ENCODE measurements at regions of chr21 and their contacts with region 1.

Region 1: DNA sequence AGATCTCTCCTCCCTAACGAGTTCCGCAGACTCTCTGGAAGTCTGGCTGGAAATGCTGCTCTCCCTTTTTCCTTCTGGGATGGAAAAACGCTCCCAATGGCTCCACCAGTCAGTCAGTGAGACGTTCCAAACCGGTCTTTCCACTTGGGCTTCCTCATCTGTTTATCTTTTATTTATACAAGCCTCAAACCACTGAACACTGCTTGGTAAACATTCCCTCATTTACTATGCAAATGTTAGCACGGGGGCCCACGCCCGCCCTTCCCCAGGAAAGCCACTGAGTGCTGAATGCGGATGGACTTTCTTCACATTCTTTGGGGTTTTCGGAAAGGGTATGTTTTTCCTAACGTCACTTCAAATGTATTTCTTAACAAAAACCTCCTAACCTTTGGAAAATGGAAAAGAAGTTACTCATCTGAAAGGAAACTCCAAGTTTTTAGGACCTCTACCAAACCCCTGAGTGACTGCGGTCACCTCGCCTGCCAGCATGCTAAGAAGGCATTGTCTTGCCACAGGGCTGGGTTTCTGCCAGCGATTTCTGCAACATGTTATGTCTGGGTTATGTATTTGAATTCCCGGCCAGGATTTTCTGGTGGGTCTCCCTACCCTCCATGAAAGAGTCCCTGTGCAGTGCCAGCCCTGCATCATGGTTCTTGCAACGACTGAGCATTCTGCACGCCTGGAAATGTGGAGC is 14.0 kb upstream of the UMODL1 start:
- DNase-seq: no peak
- H3K4me3 ChIP-seq: no peak overlapping the region
- H3K27ac ChIP-seq: no peak overlapping the region
- H3K4me1 ChIP-seq: no peaks in the 10 kb centered on the region
- H3K27me3 ChIP-seq: no peaks in the 10 kb centered on the region
- CTCF ChIP-seq: no peak
- POLR2A ChIP-seq: no peak

Region 2: DNA sequence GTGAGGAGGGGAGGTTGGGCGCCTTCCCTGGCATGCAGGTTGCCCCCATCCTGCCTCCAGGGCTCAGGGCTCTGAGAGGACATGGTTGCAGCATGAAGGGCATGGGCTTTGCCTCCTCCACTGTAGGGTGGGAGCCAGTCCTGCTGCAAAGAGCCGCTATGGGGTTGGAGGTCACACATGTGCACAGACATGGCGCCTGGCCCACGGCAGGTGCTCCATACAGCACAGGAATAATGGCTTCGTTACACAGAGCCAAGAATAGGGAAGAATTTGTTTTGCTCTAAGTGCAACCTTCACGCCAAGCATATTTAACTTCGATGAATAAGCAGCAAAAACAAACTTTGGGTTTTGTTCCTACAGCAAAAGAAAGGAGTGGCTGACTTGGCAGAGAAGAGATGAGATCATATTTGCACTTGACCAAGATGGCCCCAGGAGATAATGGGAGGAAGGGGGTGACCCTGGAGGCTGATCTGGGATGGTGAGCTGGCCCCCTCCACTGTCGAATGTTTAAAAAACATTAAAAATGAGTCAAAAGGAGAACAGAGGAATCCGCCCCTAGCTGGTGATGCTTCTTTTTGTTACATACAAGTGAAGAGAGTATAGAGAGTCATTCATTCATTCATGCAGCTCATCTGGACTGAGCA is 91.0 kb before region 1 on chr21:
- intact Hi-C with region 1: loop called in 1 of 2 experiments (anchors 10 kb)
- DNase-seq: peak in 3 of 7 donors; percentile 26 to 56 (median 47)
- H3K4me3 ChIP-seq: no peak overlapping the region
- H3K27ac ChIP-seq: peak overlapping the region in 1 of 5 donors; percentile 24
- H3K4me1 ChIP-seq: peaks cover 9 to 14% of the 10 kb centered on the region in 2 donors
- H3K27me3 ChIP-seq: no peaks in the 10 kb centered on the region
- CTCF ChIP-seq: no peak
- POLR2A ChIP-seq: no peak

Region 3: DNA sequence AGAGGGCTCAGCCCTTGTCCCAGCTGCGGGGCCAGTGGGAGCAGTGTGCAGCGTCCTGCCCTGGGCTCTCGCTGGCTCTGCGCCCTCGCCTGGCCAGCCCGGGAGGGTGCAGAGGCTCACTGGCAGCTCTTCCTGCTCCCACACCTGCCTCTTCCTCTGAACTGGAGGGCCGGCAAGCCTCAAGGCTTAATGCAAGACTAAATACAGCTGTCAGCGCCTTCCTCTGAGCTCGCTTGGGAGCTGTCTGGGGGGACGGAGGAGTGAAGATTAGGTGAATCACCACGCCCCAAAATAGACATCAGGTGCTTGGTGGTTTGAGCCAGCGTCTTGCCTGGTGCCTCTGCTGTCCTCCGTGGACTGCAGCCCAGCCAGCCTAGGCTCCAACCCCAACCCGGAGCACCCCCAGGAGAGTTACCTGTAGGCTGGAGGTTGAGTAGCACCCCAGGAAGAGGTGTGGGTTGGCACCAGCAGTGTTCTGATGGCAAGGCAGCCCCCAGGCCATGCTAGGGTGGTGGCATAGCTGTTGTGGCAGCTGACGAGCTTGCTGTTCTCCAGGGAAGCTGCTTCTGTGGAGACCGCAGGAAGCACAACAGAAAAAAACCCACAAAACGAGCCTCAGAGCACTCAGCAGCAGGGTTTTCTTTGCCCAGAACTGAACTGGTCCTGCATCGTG is 50.9 kb after region 1 on chr21:
- intact Hi-C with region 1: loop called in 1 of 2 experiments (anchors 10 kb)
- DNase-seq: peak; percentile 61 to 85 (median 77)
- H3K4me3 ChIP-seq: no peak overlapping the region
- H3K27ac ChIP-seq: no peak overlapping the region
- H3K4me1 ChIP-seq: peaks cover 0 to 7% of the 10 kb centered on the region in 2 donors
- H3K27me3 ChIP-seq: no peaks in the 10 kb centered on the region
- CTCF ChIP-seq: peak; percentile 64 to 81 (median 76)
- POLR2A ChIP-seq: no peak

Measured in adrenal gland (tissue), 19 donors.